BJ (cell line): ENCODE measurements at regions of chr6 and their contacts with region 1.

Region 1: DNA sequence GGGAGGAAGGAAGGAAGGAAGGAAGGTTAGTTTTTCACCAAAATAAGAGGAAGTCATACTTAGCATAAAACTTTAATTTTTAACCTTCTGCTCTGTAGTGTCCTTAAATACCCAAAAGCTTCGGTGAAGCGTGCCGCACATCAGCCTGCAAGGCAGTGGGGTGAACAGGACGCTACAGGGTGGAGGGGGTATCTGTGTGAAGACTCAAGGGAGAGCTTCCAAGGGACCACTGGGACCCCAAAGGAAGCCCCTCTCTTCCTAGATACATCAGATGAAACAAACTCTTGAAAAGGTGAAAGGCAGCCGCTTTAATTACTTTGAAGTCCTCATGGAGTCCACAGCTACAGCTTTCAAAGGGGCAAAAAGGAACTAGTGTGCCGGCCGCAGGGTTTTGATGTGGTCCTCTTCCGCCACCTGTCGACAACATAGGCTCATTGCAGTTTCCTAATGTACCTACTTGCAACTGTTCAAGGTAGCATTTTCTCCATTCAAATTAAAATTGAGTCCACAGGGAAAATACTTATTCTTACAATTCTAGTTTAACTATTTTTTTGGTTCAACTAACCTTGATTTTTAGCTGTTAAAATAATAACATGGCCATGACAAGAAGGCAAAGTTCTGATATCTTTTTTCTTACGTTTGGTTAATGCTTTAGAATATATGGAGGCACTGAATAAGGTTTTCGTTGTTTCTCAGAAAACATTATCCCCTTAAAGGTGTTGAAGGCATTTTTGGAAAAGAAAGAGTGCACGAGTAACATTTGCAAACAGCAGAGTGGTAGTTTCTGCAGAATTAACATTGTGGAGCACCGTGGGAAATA is 135.0 kb upstream of the RIPOR2 start:
- DNase-seq: no peak
- H3K4me3 ChIP-seq: no peak overlapping the region
- H3K27me3 ChIP-seq: no peaks in the 10 kb centered on the region
- CTCF ChIP-seq: peak; percentile 83

Region 2: DNA sequence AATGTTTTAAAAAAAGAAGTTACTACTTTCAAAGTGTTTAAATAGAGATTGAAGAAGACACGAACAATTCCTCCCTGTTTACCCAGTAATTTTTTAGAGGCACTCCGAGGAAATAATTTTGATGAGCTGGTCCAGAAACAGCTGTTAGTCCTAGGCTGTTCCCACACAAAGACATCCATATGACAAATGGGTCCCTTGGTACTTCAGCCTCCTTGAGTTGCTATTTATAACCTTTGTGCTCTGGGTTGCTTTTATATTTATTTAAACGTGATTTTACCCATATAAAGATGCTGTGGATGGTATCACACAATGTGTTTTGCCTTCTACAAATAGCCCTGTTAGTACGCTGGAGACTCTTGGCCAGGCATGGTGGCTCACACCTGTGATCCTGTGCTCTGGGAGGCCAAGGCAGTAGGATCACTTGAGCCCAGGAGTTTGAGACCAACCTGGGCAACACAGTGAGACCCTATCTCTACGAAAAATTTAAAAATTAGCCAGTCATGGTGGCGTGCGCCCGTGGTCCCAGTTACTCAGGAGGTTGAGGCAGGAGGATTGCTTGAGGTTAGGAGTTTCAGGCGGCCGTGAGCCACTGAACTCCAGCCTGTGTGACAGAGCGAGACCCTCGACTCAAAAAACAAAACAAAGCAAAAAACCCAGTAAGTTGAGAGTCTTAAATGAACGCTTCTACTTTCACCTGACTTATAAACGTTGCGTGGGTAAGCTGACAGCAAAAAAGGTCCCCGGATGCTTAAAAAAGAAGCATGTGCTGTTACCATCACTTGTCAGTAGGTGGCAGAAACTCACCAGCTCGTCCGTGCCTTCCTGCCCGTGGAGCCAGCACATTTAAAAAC is 215.1 kb before region 1 on chr6:
- CTCF ChIA-PET with region 1: interaction called, 25 read pairs
- POLR2A ChIA-PET with region 1: interaction called, 3 read pairs
- DNase-seq: no peak
- H3K4me3 ChIP-seq: no peak overlapping the region
- H3K27me3 ChIP-seq: no peaks in the 10 kb centered on the region
- CTCF ChIP-seq: peak; percentile 77

Region 3: GRCh38 chr6:25193460-25194171 is 122.9 kb after region 1 on chr6:
- CTCF ChIA-PET with region 1: no interaction called
- POLR2A ChIA-PET with region 1: no interaction called
- DNase-seq: peak; percentile 92
- H3K4me3 ChIP-seq: no peak overlapping the region
- H3K27me3 ChIP-seq: no peaks in the 10 kb centered on the region
- CTCF ChIP-seq: no peak